GM12878 (cell line): ENCODE measurements at regions of chr15 and their contacts with region 1.

Region 1: GRCh38 chr15:65869127-65869953 is at the start of gene RAB11A:
- DNase-seq: peak; percentile 85
- ATAC-seq: peak; percentile 95
- H3K4me3 ChIP-seq: peak within 1 kb of the TSS; percentile 71
- H3K27ac ChIP-seq: peak within 1 kb of the TSS; percentile 80
- H3K4me1 ChIP-seq: no peaks in the 10 kb centered on the region
- H3K27me3 ChIP-seq: no peaks in the 10 kb centered on the region
- CTCF ChIP-seq: peak; percentile 45 to 60 (median 45); a peak in 5 of 6 replicates
- EP300 ChIP-seq: no peak
- POLR2A ChIP-seq: peak; percentile 92
- RAD21 ChIP-seq: peak; percentile 33; the same call in 1 of the 2 replicates
- polyA plus RNA-seq, gene RAB11A: 155 to 179 TPM

Region 2: GRCh38 chr15:65610871-65611718 is 258.2 kb before region 1 on chr15 and contains the start of gene INTS14:
- CTCF ChIA-PET with region 1: interaction called, 5 read pairs
- POLR2A ChIA-PET with region 1: interaction called, 10 read pairs
- RAD21 ChIA-PET with region 1: interaction called, 7 read pairs
- SMC1A ChIA-PET with region 1: interaction called, 12 read pairs
- in situ Hi-C with region 1: no loop called
- intact Hi-C with region 1: no loop called
- DNase-seq: peak; percentile 67
- ATAC-seq: peak; percentile 99
- H3K4me3 ChIP-seq: peak within 1 kb of the TSS; percentile 88
- H3K27ac ChIP-seq: peak within 1 kb of the TSS; percentile 76
- H3K4me1 ChIP-seq: peaks cover 7% of the 10 kb centered on the region
- H3K27me3 ChIP-seq: no peaks in the 10 kb centered on the region
- CTCF ChIP-seq: peak; percentile 63 to 92 (median 67)
- EP300 ChIP-seq: peak in 1 of 2 experiments; percentile 27; a peak in 1 of 4 replicates
- POLR2A ChIP-seq: peak; percentile 88
- RAD21 ChIP-seq: peak; percentile 41; the same call in 1 of the 2 replicates
- polyA plus RNA-seq, gene INTS14: 39.4 to 41.9 TPM

Region 3: GRCh38 chr15:65856821-65857455 is 12.4 kb before region 1 on chr15:
- CTCF ChIA-PET with region 1: interaction called, 38 read pairs
- POLR2A ChIA-PET with region 1: interaction called, 4 read pairs
- RAD21 ChIA-PET with region 1: interaction called, 13 read pairs
- SMC1A ChIA-PET with region 1: interaction called, 8 read pairs
- in situ Hi-C with region 1: no loop called
- intact Hi-C with region 1: no loop called
- DNase-seq: no peak
- ATAC-seq: peak; percentile 89
- H3K4me3 ChIP-seq: no peak overlapping the region
- H3K27ac ChIP-seq: no peak overlapping the region
- H3K4me1 ChIP-seq: peaks cover 19% of the 10 kb centered on the region
- H3K27me3 ChIP-seq: no peaks in the 10 kb centered on the region
- CTCF ChIP-seq: peak; percentile 74 to 91 (median 88)
- EP300 ChIP-seq: no peak
- POLR2A ChIP-seq: no peak
- RAD21 ChIP-seq: peak; percentile 51

Region 4: GRCh38 chr15:65881766-65882434 is 12.6 kb after region 1 on chr15:
- CTCF ChIA-PET with region 1: interaction called, 6 read pairs
- POLR2A ChIA-PET with region 1: interaction called, 6 read pairs
- RAD21 ChIA-PET with region 1: no interaction called
- SMC1A ChIA-PET with region 1: interaction called, 10 read pairs
- in situ Hi-C with region 1: no loop called
- intact Hi-C with region 1: no loop called
- DNase-seq: no peak
- ATAC-seq: peak; percentile 57
- H3K4me3 ChIP-seq: no peak overlapping the region
- H3K27ac ChIP-seq: no peak overlapping the region; the same call in 1 of the 2 replicates
- H3K4me1 ChIP-seq: peaks cover 11% of the 10 kb centered on the region
- H3K27me3 ChIP-seq: no peaks in the 10 kb centered on the region
- CTCF ChIP-seq: no peak
- EP300 ChIP-seq: no peak
- POLR2A ChIP-seq: no peak
- RAD21 ChIP-seq: no peak

Region 5: GRCh38 chr15:65902378-65902777 is 33.0 kb after region 1 on chr15:
- CTCF ChIA-PET with region 1: interaction called, 4 read pairs
- POLR2A ChIA-PET with region 1: interaction called, 10 read pairs
- RAD21 ChIA-PET with region 1: interaction called, 23 read pairs
- SMC1A ChIA-PET with region 1: interaction called, 17 read pairs
- in situ Hi-C with region 1: no loop called
- intact Hi-C with region 1: no loop called
- DNase-seq: peak; percentile 57
- ATAC-seq: peak; percentile 93
- H3K4me3 ChIP-seq: no peak overlapping the region
- H3K27ac ChIP-seq: peak overlapping the region; percentile 63
- H3K4me1 ChIP-seq: peaks cover 27% of the 10 kb centered on the region
- H3K27me3 ChIP-seq: no peaks in the 10 kb centered on the region
- CTCF ChIP-seq: no peak
- EP300 ChIP-seq: no peak
- POLR2A ChIP-seq: no peak
- RAD21 ChIP-seq: no peak